Vagina (tissue), 2 donors: ENCODE measurements at regions of chr19 and their contacts with region 1.

Region 1: GRCh38 chr19:41218615-41219507 is at the start of gene AXL:
- DNase-seq: peak in 1 of 2 donors; percentile 96
- H3K4me3 ChIP-seq: peak within 1 kb of the TSS; percentile 61 to 90
- H3K27ac ChIP-seq: peak within 1 kb of the TSS; percentile 95
- H3K4me1 ChIP-seq: peaks cover 41% of the 10 kb centered on the region
- H3K27me3 ChIP-seq: no peaks in the 10 kb centered on the region
- CTCF ChIP-seq: no peak
- POLR2A ChIP-seq: peak in 1 of 2 donors; percentile 66
- total RNA-seq, gene AXL: 53.5 TPM

Region 2: GRCh38 chr19:41186971-41187883 is 31.6 kb before region 1 on chr19:
- intact Hi-C with region 1: no loop called
- DNase-seq: no peak
- H3K4me3 ChIP-seq: no peak overlapping the region
- H3K27ac ChIP-seq: no peak overlapping the region
- H3K4me1 ChIP-seq: no peaks in the 10 kb centered on the region
- H3K27me3 ChIP-seq: no peaks in the 10 kb centered on the region
- CTCF ChIP-seq: no peak
- POLR2A ChIP-seq: no peak

Region 3: DNA sequence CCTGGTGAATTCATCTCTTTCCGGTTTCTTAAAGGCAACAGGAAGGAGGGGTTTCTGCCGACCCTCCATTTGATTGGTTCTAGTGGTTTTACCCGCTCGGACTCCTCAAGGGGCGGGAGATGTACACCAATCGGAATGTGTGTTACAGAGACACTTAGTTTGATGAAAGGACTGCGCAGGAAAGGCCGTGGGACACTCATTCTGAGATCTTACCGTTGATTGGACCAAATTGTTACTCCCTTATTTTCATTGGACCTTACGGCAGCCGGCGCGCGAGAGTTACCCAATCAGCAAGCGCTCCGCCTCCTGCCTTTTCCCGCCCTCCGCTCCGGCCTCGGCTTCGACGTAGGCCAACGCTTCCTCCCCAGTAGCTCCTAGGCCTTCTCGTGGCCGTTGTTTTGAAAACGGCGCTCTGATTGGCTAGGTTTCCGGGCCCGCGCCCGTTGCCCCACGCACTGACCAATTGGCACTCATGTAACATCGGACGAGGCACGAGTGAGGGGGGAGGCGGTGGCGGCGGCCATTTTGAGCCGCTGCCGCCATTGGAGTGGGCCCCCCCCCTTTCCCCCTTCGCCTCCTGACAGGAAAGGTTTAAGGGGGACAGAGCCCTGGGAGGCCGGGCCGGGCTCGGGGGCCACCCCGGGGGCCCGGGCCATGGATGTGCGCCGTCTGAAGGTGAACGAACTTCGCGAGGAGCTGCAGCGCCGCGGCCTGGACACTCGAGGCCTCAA is 45.2 kb after region 1 on chr19 and contains the start of gene HNRNPUL1:
- intact Hi-C with region 1: loop called (anchors 5 kb)
- DNase-seq: peak; percentile 100
- H3K4me3 ChIP-seq: peak within 1 kb of the TSS; percentile 80 to 88
- H3K27ac ChIP-seq: peak within 1 kb of the TSS; percentile 98
- H3K4me1 ChIP-seq: peaks cover 28% of the 10 kb centered on the region
- H3K27me3 ChIP-seq: no peaks in the 10 kb centered on the region
- CTCF ChIP-seq: no peak
- POLR2A ChIP-seq: no peak
- total RNA-seq, gene HNRNPUL1: 116 TPM

Region 4: DNA sequence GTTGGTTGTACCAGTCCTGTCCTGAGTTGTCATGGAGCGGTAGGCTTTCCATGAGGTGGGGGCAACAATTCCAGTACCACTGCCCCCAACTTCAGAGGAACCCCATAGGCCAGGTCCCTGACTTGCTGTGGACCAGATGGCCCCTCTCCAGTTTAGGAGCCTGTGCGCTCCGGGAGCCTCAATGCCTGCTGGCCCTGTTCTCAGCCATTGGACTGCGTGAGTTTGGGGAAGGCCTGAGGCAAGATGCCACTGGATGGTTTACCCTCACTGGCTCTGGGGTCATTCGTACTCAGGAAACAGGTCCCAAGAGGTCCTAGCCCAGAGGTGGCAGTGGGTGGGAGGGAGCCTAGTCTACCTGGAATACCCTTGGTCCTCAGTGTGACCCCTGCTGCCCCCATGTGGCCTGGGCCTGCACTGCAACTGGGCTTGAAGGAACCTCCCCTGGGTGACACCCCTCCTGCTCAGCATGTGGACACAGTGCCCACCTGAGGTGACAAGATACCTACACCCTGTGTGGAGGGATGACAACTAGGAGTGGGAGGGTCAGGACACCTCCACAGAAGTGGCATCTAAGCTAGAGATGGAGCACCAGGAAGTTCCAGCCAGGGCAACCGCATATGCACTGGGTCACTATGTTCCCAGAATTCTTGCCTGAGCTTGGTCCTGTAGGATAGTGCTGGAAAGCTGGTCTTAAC is 1077.1 kb after region 1 on chr19:
- intact Hi-C with region 1: no loop called
- DNase-seq: no peak
- H3K4me3 ChIP-seq: no peak overlapping the region
- H3K27ac ChIP-seq: no peak overlapping the region
- H3K4me1 ChIP-seq: no peaks in the 10 kb centered on the region
- H3K27me3 ChIP-seq: no peaks in the 10 kb centered on the region
- CTCF ChIP-seq: peak; percentile 86 to 94 (median 88)
- POLR2A ChIP-seq: no peak